ENCODE measurements at regions of chr2 and their contacts with region 1.

Region 1: GRCh38 chr2:60439219-60439974 is 114.1 kb downstream of the BCL11A start:
- DNase-seq: peak; percentile 96
- ATAC-seq: peak; percentile 98
- H3K4me3 ChIP-seq: peak overlapping the region; percentile 38; the same call in 1 of the 2 replicates
- H3K27ac ChIP-seq: peak overlapping the region; percentile 94
- H3K4me1 ChIP-seq: peaks cover 31% of the 10 kb centered on the region
- H3K27me3 ChIP-seq: no peaks in the 10 kb centered on the region
- CTCF ChIP-seq: peak; percentile 62 to 87 (median 87)
- EP300 ChIP-seq: peak; percentile 64 to 98; a peak in 3 of 4 replicates
- POLR2A ChIP-seq: peak; percentile 60; the same call in 1 of the 2 replicates
- RAD21 ChIP-seq: peak; percentile 62

Region 2: GRCh38 chr2:60046529-60046928 is 392.9 kb before region 1 on chr2:
- CTCF ChIA-PET with region 1: no interaction called
- POLR2A ChIA-PET with region 1: no interaction called
- RAD21 ChIA-PET with region 1: no interaction called
- SMC1A ChIA-PET with region 1: no interaction called
- in situ Hi-C with region 1: no loop called
- intact Hi-C with region 1: no loop called
- DNase-seq: no peak
- ATAC-seq: no peak
- H3K4me3 ChIP-seq: no peak overlapping the region
- H3K27ac ChIP-seq: no peak overlapping the region
- H3K4me1 ChIP-seq: no peaks in the 10 kb centered on the region
- H3K27me3 ChIP-seq: no peaks in the 10 kb centered on the region
- CTCF ChIP-seq: no peak
- EP300 ChIP-seq: no peak
- POLR2A ChIP-seq: no peak
- RAD21 ChIP-seq: no peak

Region 3: GRCh38 chr2:60312618-60313017 is 126.8 kb before region 1 on chr2:
- CTCF ChIA-PET with region 1: no interaction called
- POLR2A ChIA-PET with region 1: interaction called, 3 read pairs
- RAD21 ChIA-PET with region 1: interaction called, 6 read pairs
- SMC1A ChIA-PET with region 1: interaction called, 3 read pairs
- in situ Hi-C with region 1: no loop called
- intact Hi-C with region 1: loop called (anchors 5 kb)
- DNase-seq: peak; percentile 58
- ATAC-seq: peak; percentile 84
- H3K4me3 ChIP-seq: no peak overlapping the region
- H3K27ac ChIP-seq: peak overlapping the region; percentile 70; the same call in 1 of the 2 replicates
- H3K4me1 ChIP-seq: peaks cover 67% of the 10 kb centered on the region
- H3K27me3 ChIP-seq: no peaks in the 10 kb centered on the region
- CTCF ChIP-seq: no peak
- EP300 ChIP-seq: no peak
- POLR2A ChIP-seq: no peak
- RAD21 ChIP-seq: no peak

Region 4: GRCh38 chr2:60353406-60353800 is 86.0 kb before region 1 on chr2:
- CTCF ChIA-PET with region 1: interaction called, 3 read pairs
- POLR2A ChIA-PET with region 1: no interaction called
- RAD21 ChIA-PET with region 1: no interaction called
- SMC1A ChIA-PET with region 1: interaction called, 7 read pairs
- in situ Hi-C with region 1: no loop called
- intact Hi-C with region 1: loop called (anchors 5 kb)
- DNase-seq: no peak
- ATAC-seq: peak; percentile 15
- H3K4me3 ChIP-seq: peak overlapping the region; percentile 30; the same call in 1 of the 2 replicates
- H3K27ac ChIP-seq: peak overlapping the region; percentile 99
- H3K4me1 ChIP-seq: peaks cover 75% of the 10 kb centered on the region
- H3K27me3 ChIP-seq: no peaks in the 10 kb centered on the region
- CTCF ChIP-seq: 0 out of 6 replicates have a peak, but pooled peaks of 1 of the 3 experiments have one; percentile 16
- EP300 ChIP-seq: no peak
- POLR2A ChIP-seq: peak; percentile 19; the same call in 1 of the 2 replicates
- RAD21 ChIP-seq: peak; percentile 25; the same call in 1 of the 2 replicates

Region 5: DNA sequence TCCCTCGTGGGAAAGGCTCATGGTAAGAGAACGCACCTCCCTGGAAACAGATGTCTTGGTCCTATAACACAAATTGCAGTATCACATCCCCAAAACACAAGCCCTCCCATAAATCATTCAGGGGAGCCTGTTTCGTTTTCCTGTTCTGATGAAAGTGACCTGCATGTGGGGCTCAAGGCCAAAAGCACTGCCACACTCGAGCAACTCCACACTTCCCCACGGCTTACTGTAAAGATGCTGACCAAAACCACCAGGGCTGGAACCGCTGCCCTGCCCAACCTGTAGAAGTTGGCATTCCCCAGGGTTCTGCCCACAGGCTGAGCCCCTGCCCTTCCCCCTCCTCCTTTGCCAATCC is 25.6 kb before region 1 on chr2:
- CTCF ChIA-PET with region 1: no interaction called
- POLR2A ChIA-PET with region 1: no interaction called
- RAD21 ChIA-PET with region 1: no interaction called
- SMC1A ChIA-PET with region 1: no interaction called
- in situ Hi-C with region 1: no loop called
- intact Hi-C with region 1: loop called (anchors 1 kb)
- DNase-seq: peak; percentile 78
- ATAC-seq: peak; percentile 91
- H3K4me3 ChIP-seq: no peak overlapping the region
- H3K27ac ChIP-seq: peak overlapping the region; percentile 61
- H3K4me1 ChIP-seq: peaks cover 41% of the 10 kb centered on the region
- H3K27me3 ChIP-seq: no peaks in the 10 kb centered on the region
- CTCF ChIP-seq: no peak
- EP300 ChIP-seq: no peak
- POLR2A ChIP-seq: no peak
- RAD21 ChIP-seq: no peak

Region 6: DNA sequence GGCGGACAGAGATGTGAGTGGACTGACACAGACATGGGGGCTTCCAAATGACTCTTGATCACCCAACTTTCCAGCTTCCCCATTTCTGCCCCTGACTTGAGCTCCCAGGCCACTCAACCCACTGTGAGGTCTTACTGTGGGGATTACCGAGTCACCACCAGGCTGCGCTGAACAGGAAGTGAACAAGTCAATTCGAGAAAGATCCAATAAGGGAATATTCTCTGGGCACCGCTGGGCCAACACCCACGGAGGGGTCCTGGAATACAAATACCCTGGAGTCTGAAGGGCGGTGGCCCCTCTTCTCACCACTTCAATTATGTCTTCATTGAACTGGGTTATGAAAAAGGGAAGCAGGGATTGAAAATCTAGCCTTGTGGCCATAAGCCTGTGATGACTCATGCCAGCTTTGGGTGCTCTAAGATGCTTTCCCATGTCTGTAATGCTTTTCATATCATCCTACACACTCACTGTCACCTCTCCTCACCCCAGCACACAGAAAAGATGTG is 76.4 kb after region 1 on chr2:
- CTCF ChIA-PET with region 1: interaction called, 3 read pairs
- POLR2A ChIA-PET with region 1: interaction called, 3 read pairs
- RAD21 ChIA-PET with region 1: interaction called, 7 read pairs
- SMC1A ChIA-PET with region 1: interaction called, 7 read pairs
- in situ Hi-C with region 1: no loop called
- intact Hi-C with region 1: loop called (anchors 1 kb)
- DNase-seq: peak; percentile 90
- ATAC-seq: peak; percentile 94
- H3K4me3 ChIP-seq: 0 out of 2 replicates have a peak overlapping the region, but pooled peaks have one; percentile 1
- H3K27ac ChIP-seq: peak overlapping the region; percentile 87
- H3K4me1 ChIP-seq: peaks cover 77% of the 10 kb centered on the region
- H3K27me3 ChIP-seq: no peaks in the 10 kb centered on the region
- CTCF ChIP-seq: no peak; a peak in 1 of 6 replicates
- EP300 ChIP-seq: peak; percentile 39 to 53; a peak in 1 of 4 replicates
- POLR2A ChIP-seq: no peak
- RAD21 ChIP-seq: no peak

Region 7: DNA sequence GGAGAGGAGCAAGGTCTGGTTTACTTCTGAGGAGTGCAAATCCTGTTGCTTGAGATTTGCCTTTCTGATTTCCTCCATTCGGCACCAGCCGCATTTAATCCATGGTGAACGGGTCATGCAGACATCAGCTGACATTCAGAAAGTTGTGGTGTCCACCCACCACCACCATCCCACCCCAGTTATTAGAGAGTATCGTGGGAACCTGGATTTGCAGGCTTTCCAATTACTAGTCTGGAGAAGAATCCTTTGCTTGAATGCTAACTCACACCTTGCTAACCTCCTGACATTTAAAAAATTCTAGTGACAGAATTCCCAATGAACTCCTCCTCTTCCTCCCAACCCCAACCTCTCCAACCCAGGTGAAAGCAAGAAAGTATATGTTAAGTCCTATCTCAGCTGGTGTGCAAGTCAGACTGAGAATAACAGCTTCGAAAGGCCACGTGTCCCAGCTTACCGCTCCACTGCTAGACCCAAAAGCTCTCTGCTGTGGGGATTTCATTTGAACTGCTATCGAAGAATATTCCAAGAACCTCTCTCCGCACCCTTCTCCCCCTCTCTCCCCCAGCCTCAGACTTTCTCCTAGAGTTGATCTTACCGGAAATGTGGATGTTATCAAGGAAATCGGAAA is 96.4 kb after region 1 on chr2:
- CTCF ChIA-PET with region 1: no interaction called
- POLR2A ChIA-PET with region 1: interaction called, 4 read pairs
- RAD21 ChIA-PET with region 1: no interaction called
- SMC1A ChIA-PET with region 1: interaction called, 4 read pairs
- in situ Hi-C with region 1: no loop called
- intact Hi-C with region 1: loop called (anchors 1 kb)
- DNase-seq: no peak
- ATAC-seq: peak; percentile 76
- H3K4me3 ChIP-seq: peak overlapping the region; percentile 45
- H3K27ac ChIP-seq: peak overlapping the region; percentile 49
- H3K4me1 ChIP-seq: peaks cover 13% of the 10 kb centered on the region
- H3K27me3 ChIP-seq: peaks cover 0 to 3% of the 10 kb centered on the region in 2 experiments; a peak in 2 of 4 replicates
- CTCF ChIP-seq: no peak
- EP300 ChIP-seq: no peak
- POLR2A ChIP-seq: no peak
- RAD21 ChIP-seq: no peak

Measured in GM12878 (cell line).